Calu3 (cell line): ENCODE measurements at regions of chr17 and their contacts with region 1.

Region 1: DNA sequence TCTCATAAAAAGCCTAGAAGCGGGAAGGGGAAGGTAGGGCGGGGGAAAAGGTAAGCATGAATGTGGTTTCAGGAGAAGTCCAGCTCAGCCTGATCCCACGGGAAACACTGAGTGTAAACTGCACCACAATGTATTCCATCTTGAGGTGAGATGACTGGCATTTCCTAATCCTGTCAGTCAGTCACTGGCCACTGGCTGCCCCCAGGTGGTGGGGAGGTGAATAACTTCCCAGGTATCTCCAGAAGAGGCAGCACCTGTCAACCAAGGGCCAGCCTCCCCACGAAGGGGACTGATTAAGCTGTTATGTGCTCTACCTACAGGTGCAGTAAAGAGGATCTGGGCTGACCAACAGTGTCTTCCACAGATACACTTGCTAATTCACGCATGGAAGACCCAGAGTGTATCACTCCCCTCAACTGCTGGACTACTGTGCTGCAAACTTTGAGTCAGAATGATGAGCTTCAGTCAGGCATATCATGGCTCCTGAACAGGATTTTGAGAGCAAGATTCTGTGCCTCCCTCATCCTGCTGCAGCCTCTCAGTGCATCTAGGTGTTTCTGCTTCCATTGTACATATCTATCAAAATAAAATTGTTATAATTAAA is 108.5 kb upstream of the CCL2 start:
- DNase-seq: peak; percentile 85
- H3K4me3 Mint-ChIP-seq: no peak overlapping the region
- H3K27ac Mint-ChIP-seq: no peak overlapping the region
- H3K4me1 Mint-ChIP-seq: no peaks in the 10 kb centered on the region
- H3K27me3 Mint-ChIP-seq: peaks cover 8% of the 10 kb centered on the region
- CTCF ChIP-seq: peak; percentile 64

Region 2: DNA sequence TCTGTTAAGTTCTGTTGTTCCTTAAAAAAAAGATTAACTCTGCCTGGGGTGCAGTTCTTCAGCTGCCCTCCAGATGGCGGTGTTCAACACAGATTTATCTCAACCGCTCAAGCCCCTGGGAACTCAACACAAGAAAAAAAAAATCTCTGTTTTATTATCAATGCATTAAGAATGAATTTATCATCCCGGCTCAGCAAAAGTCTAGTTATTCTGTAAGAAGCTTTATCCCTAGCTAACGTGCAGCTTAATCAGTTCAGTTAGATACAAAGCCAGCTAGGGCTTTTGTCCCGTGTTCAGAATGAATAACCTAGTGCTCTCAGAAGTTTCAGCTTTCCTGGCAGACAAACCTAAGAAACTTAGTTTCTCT is 367.3 kb before region 1 on chr17:
- CTCF ChIA-PET with region 1: interaction called, 3 read pairs
- intact Hi-C with region 1: loop called (anchors 1 kb)
- DNase-seq: peak; percentile 48
- H3K4me3 Mint-ChIP-seq: no peak overlapping the region
- H3K27ac Mint-ChIP-seq: no peak overlapping the region
- H3K4me1 Mint-ChIP-seq: no peaks in the 10 kb centered on the region
- H3K27me3 Mint-ChIP-seq: peaks cover 76% of the 10 kb centered on the region
- CTCF ChIP-seq: peak; percentile 79

Region 3: GRCh38 chr17:34081269-34081668 is 65.3 kb before region 1 on chr17:
- CTCF ChIA-PET with region 1: interaction called, 6 read pairs
- intact Hi-C with region 1: loop called (anchors 5 kb)
- DNase-seq: peak; percentile 16
- H3K4me3 Mint-ChIP-seq: no peak overlapping the region
- H3K27ac Mint-ChIP-seq: no peak overlapping the region
- H3K4me1 Mint-ChIP-seq: no peaks in the 10 kb centered on the region
- H3K27me3 Mint-ChIP-seq: peaks cover 36% of the 10 kb centered on the region
- CTCF ChIP-seq: no peak